ENCODE measurements at regions of chr4 and their contacts with region 1.

Region 1: DNA sequence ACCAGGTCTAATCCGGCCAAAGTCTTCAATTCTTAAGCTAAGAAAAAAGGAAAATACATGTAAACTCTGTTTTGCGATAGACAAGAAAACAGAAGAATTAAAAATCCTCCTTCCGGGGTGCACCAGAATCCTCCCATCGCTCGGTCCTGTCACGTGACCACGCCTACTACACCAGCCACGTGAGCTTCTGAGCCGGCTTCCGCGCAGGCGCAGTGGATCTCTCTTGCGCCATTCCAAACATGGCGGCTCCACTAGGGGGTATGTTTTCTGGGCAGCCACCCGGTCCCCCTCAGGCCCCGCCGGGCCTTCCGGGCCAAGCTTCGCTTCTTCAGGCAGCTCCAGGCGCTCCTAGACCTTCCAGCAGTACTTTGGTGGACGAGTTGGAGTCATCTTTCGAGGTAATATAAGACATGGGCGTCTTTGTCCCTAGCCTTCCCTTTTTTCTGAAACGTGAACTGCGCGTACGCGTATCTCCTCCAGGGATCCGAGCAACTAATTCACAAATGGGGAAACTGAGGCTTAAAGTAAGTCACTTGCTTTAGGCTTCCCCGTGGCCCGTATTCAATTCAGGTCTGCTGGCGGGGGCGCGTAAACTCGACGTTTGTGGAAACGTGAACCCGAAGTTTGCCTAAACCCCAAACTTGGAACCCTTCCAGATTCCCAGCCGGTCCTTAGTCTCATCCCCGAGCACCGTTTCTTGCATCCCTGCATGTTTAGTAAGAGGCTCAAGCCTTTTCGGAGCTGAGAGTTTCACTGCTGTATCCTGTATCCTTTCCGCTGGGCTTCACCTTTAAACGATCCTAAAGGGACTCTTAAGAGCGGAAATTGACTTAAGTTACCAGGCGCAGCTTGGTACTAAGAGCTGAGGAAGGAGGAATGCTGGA is at the start of gene MED28:
- DNase-seq: peak; percentile 91
- H3K4me3 ChIP-seq: peak within 1 kb of the TSS; percentile 72 to 100 (median 92)
- H3K27ac ChIP-seq: peak within 1 kb of the TSS; percentile 82
- H3K4me1 ChIP-seq: peaks cover 17% of the 10 kb centered on the region
- H3K27me3 ChIP-seq: no peaks in the 10 kb centered on the region
- CTCF ChIP-seq: peak in 1 of 2 donors; percentile 13
- POLR2A ChIP-seq: peak; percentile 90
- total RNA-seq, gene MED28: 41.2 and 49.1 TPM in 2 replicates

Region 2: DNA sequence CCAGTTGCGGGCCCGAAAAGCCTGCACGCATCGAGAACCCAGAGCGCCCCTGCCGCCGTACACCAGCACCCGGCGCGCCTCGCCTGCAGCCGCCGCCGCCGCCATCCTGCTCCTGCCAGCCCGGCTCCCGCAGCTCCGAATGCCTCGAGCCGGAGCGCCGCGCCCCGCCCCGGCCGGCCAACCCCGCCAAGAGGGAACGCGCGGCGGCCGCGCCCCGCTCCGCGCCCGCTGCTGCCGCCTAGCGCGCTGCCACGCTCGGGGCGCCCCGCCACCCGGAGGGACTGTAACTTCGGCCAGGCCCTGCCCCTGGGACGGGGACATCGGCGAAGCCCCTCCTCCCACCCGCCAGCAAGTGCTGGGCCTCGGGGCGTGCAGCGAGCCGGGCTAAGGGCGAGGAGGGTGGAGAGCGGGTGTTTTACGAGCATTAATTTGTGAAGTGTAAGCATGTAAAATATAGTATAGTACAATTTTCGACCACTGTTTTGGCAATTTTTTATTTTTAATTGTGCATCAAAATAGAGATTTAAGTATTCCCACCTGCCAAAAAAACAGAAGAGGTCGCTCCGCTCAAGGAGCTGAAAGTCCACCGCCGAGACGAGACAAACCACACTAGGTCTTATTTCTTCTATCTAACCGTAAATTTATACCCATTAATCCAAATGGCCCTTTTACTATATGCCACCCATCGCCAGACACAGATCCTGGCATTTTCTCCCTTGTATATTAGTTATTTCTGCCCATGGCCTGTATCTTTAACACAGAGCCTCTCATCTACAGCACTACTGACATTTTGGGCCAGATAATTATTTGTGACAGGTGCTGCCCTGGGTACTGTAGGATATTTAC is 102.5 kb before region 1 on chr4 and contains the start of gene QDPR:
- CTCF ChIA-PET with region 1: no interaction called
- POLR2A ChIA-PET with region 1: no interaction called
- dilution Hi-C with region 1: no loop called
- intact Hi-C with region 1: loop called (anchors 1 kb)
- DNase-seq: peak; percentile 77
- H3K4me3 ChIP-seq: peak within 1 kb of the TSS; percentile 58 to 97 (median 74)
- H3K27ac ChIP-seq: peak within 1 kb of the TSS; percentile 56
- H3K4me1 ChIP-seq: peaks cover 15% of the 10 kb centered on the region
- H3K27me3 ChIP-seq: peaks cover 14% of the 10 kb centered on the region in 2 experiments
- CTCF ChIP-seq: peak in 1 of 2 donors; percentile 45
- POLR2A ChIP-seq: peak; percentile 67
- total RNA-seq, gene QDPR: 20.9 and 24.6 TPM in 2 replicates

Region 3: GRCh38 chr4:17544205-17544604 is 70.5 kb before region 1 on chr4:
- CTCF ChIA-PET with region 1: interaction called, 18 read pairs
- POLR2A ChIA-PET with region 1: no interaction called
- dilution Hi-C with region 1: no loop called
- intact Hi-C with region 1: loop called (anchors 1 kb)
- DNase-seq: no peak
- H3K4me3 ChIP-seq: no peak overlapping the region
- H3K27ac ChIP-seq: no peak overlapping the region
- H3K4me1 ChIP-seq: peaks cover 4% of the 10 kb centered on the region
- H3K27me3 ChIP-seq: peaks cover 2 to 3% of the 10 kb centered on the region in 2 experiments
- CTCF ChIP-seq: no peak
- POLR2A ChIP-seq: no peak

Region 4: DNA sequence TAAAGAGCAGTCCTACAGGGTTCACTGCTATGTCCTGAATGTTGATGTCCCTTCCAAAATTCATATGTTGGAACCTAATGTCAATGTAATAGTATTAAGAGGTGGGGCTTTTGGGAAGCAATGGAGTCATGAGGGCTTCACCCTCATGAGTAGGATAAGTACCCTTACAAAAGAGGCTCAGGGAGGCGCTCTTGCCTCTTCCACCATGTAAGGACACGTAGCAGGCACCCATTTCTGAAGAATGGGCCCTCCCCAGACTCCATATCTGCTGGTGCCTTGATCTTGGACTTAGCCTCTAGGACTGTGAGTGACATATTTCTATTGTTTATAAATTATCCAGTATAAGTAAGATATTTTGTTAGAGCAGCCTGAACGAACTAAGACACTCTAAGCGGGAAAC is 15.6 kb after region 1 on chr4:
- CTCF ChIA-PET with region 1: no interaction called
- POLR2A ChIA-PET with region 1: no interaction called
- dilution Hi-C with region 1: no loop called
- intact Hi-C with region 1: no loop called
- DNase-seq: no peak
- H3K4me3 ChIP-seq: no peak overlapping the region
- H3K27ac ChIP-seq: no peak overlapping the region
- H3K4me1 ChIP-seq: no peaks in the 10 kb centered on the region
- H3K27me3 ChIP-seq: no peaks in the 10 kb centered on the region
- CTCF ChIP-seq: no peak
- POLR2A ChIP-seq: no peak